ENCODE measurements at regions of chr21 and their contacts with region 1.

Region 1: GRCh38 chr21:45357436-45358260 is 47.3 kb upstream of the COL18A1 start:
- DNase-seq: peak; percentile 78
- ATAC-seq: peak; percentile 73

Region 2: GRCh38 chr21:45302078-45303055 is 55.3 kb before region 1 on chr21:
- intact Hi-C with region 1: loop called (anchors 5 kb)
- DNase-seq: peak; percentile 89
- ATAC-seq: peak; percentile 70

Region 3: GRCh38 chr21:45319461-45320211 is 38.0 kb before region 1 on chr21:
- intact Hi-C with region 1: loop called (anchors 2 kb)
- DNase-seq: peak; percentile 80
- ATAC-seq: peak; percentile 46